ENCODE measurements at regions of chr3 and their contacts with region 1.

Region 1: DNA sequence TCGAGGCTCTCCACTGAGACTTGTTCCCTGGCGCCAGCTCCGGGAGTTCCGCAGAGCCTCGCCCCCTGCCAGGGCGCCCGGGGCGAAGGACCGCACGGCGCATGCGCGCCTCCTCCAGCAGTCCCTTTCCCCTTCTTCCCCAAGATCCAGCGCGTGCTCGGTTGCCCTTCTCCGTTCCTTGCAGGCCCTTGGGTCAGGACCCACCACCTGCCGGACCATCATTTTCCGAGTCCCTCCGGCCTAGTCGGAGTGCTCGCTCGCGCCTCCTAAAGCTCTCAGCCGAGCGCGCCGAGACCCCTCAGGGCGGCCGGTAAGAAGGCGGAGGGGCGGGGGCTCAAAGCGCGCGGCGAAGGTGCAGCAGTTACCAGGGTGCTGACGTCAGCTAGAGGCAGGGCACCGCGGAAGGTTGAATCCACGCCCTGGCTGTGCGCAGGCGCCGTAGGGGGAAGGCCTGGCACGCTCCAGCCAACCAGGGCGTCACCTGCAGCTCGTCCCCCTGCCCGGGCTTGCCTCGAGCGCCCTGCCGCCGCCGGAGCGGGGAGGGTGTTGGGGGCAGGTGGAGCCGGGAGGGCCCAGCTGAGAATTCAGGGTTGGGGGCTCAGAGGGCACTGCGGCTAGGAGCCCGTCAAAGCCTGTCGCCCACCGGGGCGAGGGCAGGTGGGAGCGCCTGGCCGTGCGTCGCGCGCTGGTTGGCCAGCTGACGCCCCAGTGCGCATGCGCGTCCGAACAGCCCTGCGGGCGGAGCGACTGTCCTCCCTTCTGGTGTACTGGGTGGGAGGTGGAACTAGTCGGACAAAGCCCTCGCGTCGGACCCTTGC is at the start of gene TCAIM:
- DNase-seq: peak; percentile 76
- H3K4me3 ChIP-seq: peak within 1 kb of the TSS; percentile 94
- H3K27me3 ChIP-seq: peaks cover 2% of the 10 kb centered on the region; the same call in 1 of the 2 replicates
- CTCF ChIP-seq: no peak
- polyA plus RNA-seq, gene TCAIM: 10.1 and 18.0 TPM in 2 replicates

Region 2: GRCh38 chr3:44323341-44323955 is 14.8 kb before region 1 on chr3:
- CTCF ChIA-PET with region 1: interaction called, 35 read pairs
- POLR2A ChIA-PET with region 1: no interaction called
- DNase-seq: no peak
- H3K4me3 ChIP-seq: no peak overlapping the region
- H3K27me3 ChIP-seq: no peaks in the 10 kb centered on the region
- CTCF ChIP-seq: peak; percentile 86

Region 3: GRCh38 chr3:44601749-44602148 is 263.5 kb after region 1 on chr3:
- CTCF ChIA-PET with region 1: no interaction called
- POLR2A ChIA-PET with region 1: no interaction called
- DNase-seq: no peak
- H3K4me3 ChIP-seq: no peak overlapping the region
- H3K27me3 ChIP-seq: no peaks in the 10 kb centered on the region
- CTCF ChIP-seq: no peak